ENCODE measurements at regions of chr19 and their contacts with region 1.

Region 1: GRCh38 chr19:14031719-14032480 is at the start of gene IL27RA:
- DNase-seq: peak; percentile 84 to 93 (median 92)
- H3K4me3 ChIP-seq: peak within 1 kb of the TSS; percentile 67 to 89 (median 84)
- H3K27ac ChIP-seq: peak within 1 kb of the TSS; percentile 64 to 85
- H3K4me1 ChIP-seq: peaks cover 0 to 14% (median 9%) of the 10 kb centered on the region in 4 experiments
- H3K27me3 ChIP-seq: no peaks in the 10 kb centered on the region

Region 2: DNA sequence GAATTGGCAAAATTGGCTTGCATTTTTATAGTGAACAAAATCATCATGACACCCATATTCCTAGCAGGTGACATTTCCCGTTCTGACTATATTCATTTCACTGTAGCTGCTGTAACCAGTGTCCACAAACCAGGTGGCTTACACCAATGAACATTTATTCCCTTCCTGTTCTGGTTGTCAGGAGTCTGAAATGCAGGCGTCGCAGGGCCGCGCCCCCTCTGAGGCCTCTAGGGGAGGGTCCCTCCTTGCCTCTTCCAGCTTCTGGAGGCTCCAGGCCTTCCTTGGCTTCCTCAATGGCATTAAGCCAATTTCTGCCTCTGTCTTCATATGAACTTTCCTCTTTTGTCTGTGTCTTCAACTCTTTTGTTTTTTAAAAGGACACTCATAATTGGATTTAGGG is 10.4 kb before region 1 on chr19:
- CTCF ChIA-PET with region 1: interaction called, 10 read pairs
- POLR2A ChIA-PET with region 1: interaction called, 3 read pairs
- DNase-seq: peak in 2 of 3 donors; percentile 14 to 40
- H3K4me3 ChIP-seq: no peak overlapping the region
- H3K27ac ChIP-seq: no peak overlapping the region
- H3K4me1 ChIP-seq: peaks cover 0 to 18% (median 11%) of the 10 kb centered on the region in 4 experiments
- H3K27me3 ChIP-seq: no peaks in the 10 kb centered on the region

Region 3: GRCh38 chr19:14048443-14049153 is 16.7 kb after region 1 on chr19:
- CTCF ChIA-PET with region 1: interaction called, 16 read pairs
- POLR2A ChIA-PET with region 1: no interaction called
- DNase-seq: peak; percentile 64 to 79 (median 70)
- H3K4me3 ChIP-seq: no peak overlapping the region
- H3K27ac ChIP-seq: no peak overlapping the region
- H3K4me1 ChIP-seq: peaks cover 0 to 3% (median 1%) of the 10 kb centered on the region in 4 experiments
- H3K27me3 ChIP-seq: no peaks in the 10 kb centered on the region

Region 4: GRCh38 chr19:14167576-14168138 is 135.8 kb after region 1 on chr19:
- CTCF ChIA-PET with region 1: no interaction called
- POLR2A ChIA-PET with region 1: no interaction called
- DNase-seq: peak; percentile 30 to 76 (median 69)
- H3K4me3 ChIP-seq: peak overlapping the region in 5 of 7 experiments; percentile 7 to 69 (median 48)
- H3K27ac ChIP-seq: peak overlapping the region in 1 of 2 experiments; percentile 70
- H3K4me1 ChIP-seq: peaks cover 0 to 36% (median 32%) of the 10 kb centered on the region in 4 experiments
- H3K27me3 ChIP-seq: no peaks in the 10 kb centered on the region

Measured in common myeloid progenitor, CD34-positive (primary cell).